ENCODE measurements at regions of chr3 and their contacts with region 1.

Region 1: GRCh38 chr3:30042274-30042859 is 564.0 kb upstream of the TGFBR2 start:
- DNase-seq: peak; percentile 38
- ATAC-seq: peak; percentile 70; the same call in 1 of the 2 replicates
- H3K4me3 ChIP-seq: no peak overlapping the region
- H3K27ac ChIP-seq: no peak overlapping the region
- H3K4me1 ChIP-seq: no peaks in the 10 kb centered on the region; the same call in 1 of the 2 replicates
- H3K27me3 ChIP-seq: no peaks in the 10 kb centered on the region
- CTCF ChIP-seq: peak; percentile 65; the same call in 1 of the 2 replicates

Region 2: GRCh38 chr3:30124435-30125395 is 82.3 kb after region 1 on chr3:
- CTCF ChIA-PET with region 1: no interaction called
- POLR2A ChIA-PET with region 1: no interaction called
- in situ Hi-C with region 1: no loop called
- intact Hi-C with region 1: no loop called
- DNase-seq: no peak
- ATAC-seq: no peak
- H3K4me3 ChIP-seq: no peak overlapping the region
- H3K27ac ChIP-seq: no peak overlapping the region
- H3K4me1 ChIP-seq: no peaks in the 10 kb centered on the region
- H3K27me3 ChIP-seq: no peaks in the 10 kb centered on the region
- CTCF ChIP-seq: no peak

Region 3: GRCh38 chr3:30140356-30141075 is 98.1 kb after region 1 on chr3:
- CTCF ChIA-PET with region 1: interaction called, 10 read pairs
- POLR2A ChIA-PET with region 1: no interaction called
- in situ Hi-C with region 1: no loop called
- intact Hi-C with region 1: no loop called
- DNase-seq: no peak
- ATAC-seq: no peak
- H3K4me3 ChIP-seq: no peak overlapping the region
- H3K27ac ChIP-seq: no peak overlapping the region; the same call in 1 of the 2 replicates
- H3K4me1 ChIP-seq: no peaks in the 10 kb centered on the region
- H3K27me3 ChIP-seq: no peaks in the 10 kb centered on the region
- CTCF ChIP-seq: no peak

Region 4: DNA sequence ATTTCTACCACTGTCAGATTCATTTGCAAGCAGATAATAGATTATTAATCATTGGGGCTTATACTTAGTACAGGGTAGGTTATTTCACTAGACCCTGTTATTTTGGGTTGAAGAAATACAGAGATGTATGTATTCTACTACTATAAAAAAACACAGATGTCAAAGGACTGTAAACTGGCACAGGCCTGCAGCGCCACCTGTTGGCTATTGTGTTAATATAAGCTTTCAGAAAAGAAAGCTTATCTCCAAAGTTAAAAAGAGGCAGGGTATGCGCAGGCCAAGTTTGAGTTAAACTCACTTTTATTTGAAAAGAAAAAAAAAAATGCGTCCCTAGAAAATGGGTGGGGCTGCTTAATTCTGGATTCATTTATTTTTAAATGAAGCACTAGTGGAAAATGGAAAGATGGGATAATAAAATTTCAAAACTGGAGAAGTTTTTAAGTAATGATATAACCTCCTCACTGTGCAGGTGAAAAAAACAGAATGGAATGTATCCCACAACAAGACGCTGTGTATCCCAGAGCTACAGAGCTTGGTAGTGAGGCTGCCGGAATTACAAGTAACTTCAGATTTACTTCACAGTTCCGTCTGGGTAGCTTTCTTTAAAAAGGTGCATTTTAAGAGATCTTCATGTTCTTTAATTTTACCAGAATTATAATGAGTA is 156.9 kb after region 1 on chr3:
- CTCF ChIA-PET with region 1: no interaction called
- POLR2A ChIA-PET with region 1: no interaction called
- in situ Hi-C with region 1: no loop called
- intact Hi-C with region 1: loop called (anchors 5 kb)
- DNase-seq: no peak
- ATAC-seq: no peak
- H3K4me3 ChIP-seq: no peak overlapping the region
- H3K27ac ChIP-seq: no peak overlapping the region
- H3K4me1 ChIP-seq: no peaks in the 10 kb centered on the region
- H3K27me3 ChIP-seq: no peaks in the 10 kb centered on the region
- CTCF ChIP-seq: peak; percentile 72; the same call in 1 of the 2 replicates

Region 5: GRCh38 chr3:30747771-30748281 is 705.5 kb after region 1 on chr3:
- CTCF ChIA-PET with region 1: no interaction called
- POLR2A ChIA-PET with region 1: no interaction called
- in situ Hi-C with region 1: no loop called
- intact Hi-C with region 1: loop called (anchors 5 kb)
- DNase-seq: no peak
- ATAC-seq: peak; percentile 83
- H3K4me3 ChIP-seq: no peak overlapping the region
- H3K27ac ChIP-seq: peak overlapping the region; percentile 68; the same call in 1 of the 2 replicates
- H3K4me1 ChIP-seq: peaks cover 9% of the 10 kb centered on the region
- H3K27me3 ChIP-seq: no peaks in the 10 kb centered on the region
- CTCF ChIP-seq: peak; percentile 67; the same call in 1 of the 2 replicates

Region 6: DNA sequence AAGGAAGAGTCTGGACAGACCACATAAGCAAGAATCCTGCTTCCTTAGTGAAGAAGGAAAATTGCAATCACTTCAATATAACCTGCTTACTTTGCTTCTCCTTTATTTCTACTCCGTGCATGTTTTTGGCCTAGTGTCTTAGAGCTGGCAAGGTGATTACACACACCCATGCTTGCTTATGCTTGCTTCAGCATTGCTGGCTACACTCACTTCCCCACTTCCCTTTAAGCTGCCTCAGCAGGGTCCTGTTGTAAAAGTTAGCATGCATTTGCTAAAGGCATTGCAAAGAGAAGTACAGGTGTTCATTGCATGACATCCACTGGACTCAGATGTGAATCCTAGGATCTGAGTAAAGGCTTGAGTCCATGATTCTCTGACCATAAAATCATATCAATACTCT is 1442.8 kb after region 1 on chr3:
- CTCF ChIA-PET with region 1: no interaction called
- POLR2A ChIA-PET with region 1: no interaction called
- in situ Hi-C with region 1: no loop called
- intact Hi-C with region 1: no loop called
- DNase-seq: no peak
- ATAC-seq: no peak
- H3K4me3 ChIP-seq: no peak overlapping the region
- H3K27ac ChIP-seq: no peak overlapping the region
- H3K4me1 ChIP-seq: no peaks in the 10 kb centered on the region
- H3K27me3 ChIP-seq: no peaks in the 10 kb centered on the region
- CTCF ChIP-seq: no peak

Measured in Panc1 (cell line).